Activated T-helper 1 cell treated with anti-CD3 and anti-CD28 coated beads, Interleukin-12 subunit alpha, Interleukin-12 subunit beta, Interleukin-2, Interleukin-4 antibody, amounts not matched to agents 30 ng/mL and 10 ng/mL and 1 ng/mL, durations not matched to agents 14 hours and 24 hours and 36 hours (primary cell): ENCODE measurements at regions of chr7 and their contacts with region 1.

Region 1: DNA sequence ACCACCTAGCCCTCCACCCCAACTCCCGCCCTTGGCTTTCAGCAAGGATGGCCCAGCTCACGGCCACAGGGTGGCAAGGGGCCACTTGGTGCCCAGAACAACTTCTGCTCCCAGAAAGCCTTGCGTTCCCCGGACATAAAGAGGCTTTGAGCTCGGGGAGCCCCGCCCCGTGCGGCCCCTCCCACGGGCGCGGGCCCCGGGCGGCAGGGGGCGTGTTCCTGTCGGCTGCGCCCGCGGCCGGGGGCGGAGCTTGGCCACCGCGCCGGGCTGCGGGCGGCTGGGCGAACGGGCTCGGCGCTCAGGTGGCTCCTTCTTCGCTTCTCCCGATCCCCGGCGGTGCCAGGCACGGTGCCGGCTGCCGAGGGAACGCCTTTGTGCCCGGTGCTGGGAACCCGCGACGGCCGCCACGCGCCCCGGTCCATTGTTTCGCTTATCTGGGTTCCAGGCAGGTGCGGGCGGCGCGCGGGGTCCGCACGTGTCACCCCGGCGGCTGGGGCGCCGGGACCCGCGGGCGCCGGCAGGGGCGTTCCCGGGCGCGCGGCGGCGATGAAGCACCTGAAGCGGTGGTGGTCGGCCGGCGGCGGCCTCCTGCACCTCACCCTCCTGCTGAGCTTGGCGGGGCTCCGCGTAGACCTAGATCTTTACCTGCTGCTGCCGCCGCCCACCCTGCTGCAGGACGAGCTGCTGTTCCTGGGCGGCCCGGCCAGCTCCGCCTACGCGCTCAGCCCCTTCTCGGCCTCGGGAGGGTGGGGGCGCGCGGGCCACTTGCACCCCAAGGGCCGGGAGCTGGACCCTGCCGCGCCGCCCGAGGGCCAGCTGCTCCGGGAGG is at the start of gene NFE2L3:
- DNase-seq: peak; percentile 83
- H3K4me3 Mint-ChIP-seq: peak within 1 kb of the TSS; percentile 97
- H3K27ac Mint-ChIP-seq: peak within 1 kb of the TSS; percentile 97
- H3K4me1 Mint-ChIP-seq: peaks cover 60% of the 10 kb centered on the region
- H3K27me3 Mint-ChIP-seq: peaks cover 2% of the 10 kb centered on the region
- total RNA-seq, gene NFE2L3: 80.1 TPM in 2 replicates

Region 2: GRCh38 chr7:25894902-25895791 is 257.0 kb before region 1 on chr7:
- intact Hi-C with region 1: loop called (anchors 2 kb)
- DNase-seq: peak; percentile 51
- H3K4me3 Mint-ChIP-seq: peak overlapping the region; percentile 3
- H3K27ac Mint-ChIP-seq: no peak overlapping the region
- H3K4me1 Mint-ChIP-seq: peaks cover 33% of the 10 kb centered on the region
- H3K27me3 Mint-ChIP-seq: peaks cover 6% of the 10 kb centered on the region

Region 3: GRCh38 chr7:25968205-25968993 is 183.8 kb before region 1 on chr7:
- intact Hi-C with region 1: loop called (anchors 2 kb)
- DNase-seq: peak; percentile 26
- H3K4me3 Mint-ChIP-seq: peak overlapping the region; percentile 4
- H3K27ac Mint-ChIP-seq: peak overlapping the region; percentile 69
- H3K4me1 Mint-ChIP-seq: peaks cover 33% of the 10 kb centered on the region
- H3K27me3 Mint-ChIP-seq: peaks cover 25% of the 10 kb centered on the region

Region 4: GRCh38 chr7:26097852-26098668 is 54.1 kb before region 1 on chr7:
- intact Hi-C with region 1: loop called (anchors 1 kb)
- DNase-seq: no peak
- H3K4me3 Mint-ChIP-seq: peak overlapping the region; percentile 2
- H3K27ac Mint-ChIP-seq: peak overlapping the region; percentile 74
- H3K4me1 Mint-ChIP-seq: peaks cover 42% of the 10 kb centered on the region
- H3K27me3 Mint-ChIP-seq: no peaks in the 10 kb centered on the region

Region 5: DNA sequence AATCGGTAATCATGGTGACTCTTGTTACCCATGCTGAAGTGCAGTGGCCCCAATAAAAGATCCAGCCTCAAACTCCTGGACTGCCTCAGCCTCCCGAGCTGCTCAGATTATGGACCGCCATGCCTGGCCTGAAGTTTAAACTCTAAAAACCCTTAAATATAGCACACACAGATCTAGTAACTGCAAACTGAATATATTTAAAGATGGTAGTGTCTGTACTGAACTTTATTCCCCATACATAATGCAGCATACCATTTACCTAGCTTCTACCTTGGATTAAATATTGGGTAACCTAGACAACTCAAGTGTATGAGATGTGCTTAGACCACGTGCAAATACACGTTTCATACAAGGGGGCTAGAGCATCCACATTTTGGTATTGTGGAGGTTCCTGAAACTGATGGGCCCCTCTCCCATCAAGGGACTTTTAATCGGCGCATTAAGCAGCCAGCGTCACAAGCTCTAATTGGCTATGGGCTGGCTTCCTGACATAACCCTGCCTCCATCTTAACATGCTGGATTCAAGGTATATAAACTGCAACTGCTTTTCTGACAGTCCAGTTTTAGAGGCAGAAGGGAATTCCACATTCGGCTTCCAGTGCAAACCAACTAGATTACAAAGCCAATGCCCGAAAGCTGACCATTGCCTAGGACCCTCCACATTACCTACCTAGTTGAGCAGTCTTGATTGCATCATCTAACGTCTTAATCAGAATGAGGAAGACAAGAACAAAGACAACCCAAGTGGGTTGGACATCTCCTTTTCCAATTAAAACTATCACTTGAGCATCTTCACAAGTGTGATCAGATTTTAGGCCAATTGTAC is 35.4 kb after region 1 on chr7:
- intact Hi-C with region 1: loop called (anchors 1 kb)
- DNase-seq: no peak
- H3K4me3 Mint-ChIP-seq: no peak overlapping the region
- H3K27ac Mint-ChIP-seq: peak overlapping the region; percentile 76
- H3K4me1 Mint-ChIP-seq: peaks cover 78% of the 10 kb centered on the region
- H3K27me3 Mint-ChIP-seq: no peaks in the 10 kb centered on the region

Region 6: GRCh38 chr7:26278770-26279169 is 126.6 kb after region 1 on chr7:
- intact Hi-C with region 1: loop called (anchors 1 kb)
- DNase-seq: no peak
- H3K4me3 Mint-ChIP-seq: peak overlapping the region; percentile 47
- H3K27ac Mint-ChIP-seq: no peak overlapping the region
- H3K4me1 Mint-ChIP-seq: peaks cover 22% of the 10 kb centered on the region
- H3K27me3 Mint-ChIP-seq: peaks cover 3% of the 10 kb centered on the region

Region 7: DNA sequence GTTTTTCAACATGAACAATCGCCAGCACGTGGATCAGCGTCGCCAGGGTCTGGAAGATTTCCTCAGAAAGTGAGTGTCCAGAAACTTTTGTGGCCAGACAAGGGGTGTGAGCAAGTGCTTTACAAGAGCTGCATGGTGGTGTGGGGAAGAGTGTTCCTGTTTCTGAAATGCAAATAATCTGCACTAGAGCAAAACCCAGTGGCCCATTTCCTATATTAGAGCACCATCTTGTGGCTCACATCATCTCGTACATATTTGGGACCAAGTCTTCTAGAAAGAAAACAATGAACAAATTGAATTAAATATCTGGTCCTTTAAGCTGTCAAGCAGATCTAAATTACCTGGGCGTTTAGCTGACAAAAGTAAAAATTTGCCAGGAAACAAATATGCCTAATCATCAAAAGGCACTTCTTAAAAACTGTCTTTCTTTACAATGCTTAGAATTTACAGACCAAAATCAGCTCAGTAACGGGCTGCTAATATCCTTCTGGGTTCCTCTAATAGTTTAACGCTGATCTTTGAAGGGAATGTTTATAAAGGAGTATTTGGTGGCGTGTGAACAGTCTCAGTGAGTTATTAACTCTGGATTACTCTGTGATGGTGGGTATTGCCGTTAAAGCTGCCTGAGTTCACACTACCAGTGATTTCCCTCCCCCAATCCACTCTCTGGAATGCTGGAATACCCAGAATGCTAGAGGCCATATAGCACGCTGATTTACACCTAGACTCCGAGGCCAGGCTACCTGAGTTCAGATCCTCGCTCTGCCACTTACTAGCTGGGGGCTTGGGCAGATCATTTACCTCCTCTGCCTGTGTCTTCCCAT is 213.1 kb after region 1 on chr7:
- intact Hi-C with region 1: loop called (anchors 1 kb)
- DNase-seq: peak; percentile 46
- H3K4me3 Mint-ChIP-seq: no peak overlapping the region
- H3K27ac Mint-ChIP-seq: peak overlapping the region; percentile 37
- H3K4me1 Mint-ChIP-seq: peaks cover 14% of the 10 kb centered on the region
- H3K27me3 Mint-ChIP-seq: no peaks in the 10 kb centered on the region